ENCODE measurements at regions of chr3 and their contacts with region 1.

Region 1: GRCh38 chr3:16842272-16843270 is 42.2 kb upstream of the PLCL2 start:
- DNase-seq: peak; percentile 56 to 92 (median 71)
- ATAC-seq: peak; percentile 87
- H3K4me3 ChIP-seq: peak overlapping the region; percentile 50
- H3K4me3 Mint-ChIP-seq: peak overlapping the region; percentile 88
- H3K27ac ChIP-seq: peak overlapping the region; percentile 68 to 92
- H3K27ac Mint-ChIP-seq: peak overlapping the region; percentile 97
- H3K4me1 ChIP-seq: peaks cover 61% of the 10 kb centered on the region
- H3K4me1 Mint-ChIP-seq: peaks cover 89% of the 10 kb centered on the region
- H3K27me3 ChIP-seq: no peaks in the 10 kb centered on the region
- H3K27me3 Mint-ChIP-seq: no peaks in the 10 kb centered on the region
- CTCF ChIP-seq: no peak

Region 2: DNA sequence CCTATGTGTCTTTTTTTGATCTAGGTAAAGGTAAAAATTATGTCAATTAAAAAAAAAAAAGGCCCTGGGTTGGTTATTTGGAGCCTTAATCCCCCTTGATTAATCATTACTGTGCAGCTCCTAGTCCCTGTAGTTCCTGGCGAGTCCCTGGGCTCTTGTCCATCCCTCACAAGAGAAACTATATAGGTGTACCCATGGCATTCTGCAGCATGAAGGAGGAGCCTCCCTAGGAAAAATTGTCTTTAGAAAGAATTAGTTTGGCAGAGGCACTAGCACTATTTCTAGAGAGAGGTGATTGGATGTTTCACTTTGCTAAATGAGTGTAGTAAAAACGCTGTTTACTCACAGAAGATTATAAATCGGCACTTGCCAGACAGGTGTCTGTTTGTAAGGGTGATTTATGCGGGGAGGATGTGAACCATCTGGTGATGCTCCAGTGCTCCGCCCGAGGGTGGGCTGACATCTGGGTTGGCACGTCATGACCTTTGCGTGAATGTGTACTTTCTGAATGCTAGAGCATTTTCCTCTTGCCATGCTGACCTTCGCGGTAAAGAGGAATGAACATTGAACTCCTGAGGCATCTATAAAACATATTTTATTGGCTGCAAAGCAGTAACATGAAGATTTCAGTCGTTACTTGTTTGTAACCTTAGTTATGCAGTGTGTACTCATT is 54.8 kb after region 1 on chr3:
- CTCF ChIA-PET with region 1: interaction called, 3 read pairs
- POLR2A ChIA-PET with region 1: interaction called, 17 read pairs
- intact Hi-C with region 1: no loop called
- DNase-seq: peak in 8 of 14 experiments; percentile 18 to 54 (median 40)
- ATAC-seq: peak; percentile 73
- H3K4me3 ChIP-seq: no peak overlapping the region
- H3K4me3 Mint-ChIP-seq: peak overlapping the region; percentile 7
- H3K27ac ChIP-seq: no peak overlapping the region
- H3K27ac Mint-ChIP-seq: peak overlapping the region; percentile 91
- H3K4me1 ChIP-seq: peaks cover 68% of the 10 kb centered on the region
- H3K4me1 Mint-ChIP-seq: peaks cover 88% of the 10 kb centered on the region
- H3K27me3 ChIP-seq: no peaks in the 10 kb centered on the region
- H3K27me3 Mint-ChIP-seq: no peaks in the 10 kb centered on the region
- CTCF ChIP-seq: no peak

Region 3: GRCh38 chr3:17384567-17385296 is 542.2 kb after region 1 on chr3:
- CTCF ChIA-PET with region 1: no interaction called
- POLR2A ChIA-PET with region 1: no interaction called
- intact Hi-C with region 1: no loop called
- DNase-seq: no peak
- ATAC-seq: no peak
- H3K4me3 ChIP-seq: no peak overlapping the region
- H3K4me3 Mint-ChIP-seq: no peak overlapping the region
- H3K27ac ChIP-seq: no peak overlapping the region
- H3K27ac Mint-ChIP-seq: no peak overlapping the region
- H3K4me1 ChIP-seq: no peaks in the 10 kb centered on the region
- H3K4me1 Mint-ChIP-seq: no peaks in the 10 kb centered on the region
- H3K27me3 ChIP-seq: no peaks in the 10 kb centered on the region
- H3K27me3 Mint-ChIP-seq: no peaks in the 10 kb centered on the region
- CTCF ChIP-seq: no peak